IMR-90 (cell line): ENCODE measurements at regions of chr2 and their contacts with region 1.

Region 1: GRCh38 chr2:215920244-215921100 is 92.9 kb downstream of the MREG start:
- DNase-seq: peak; percentile 87
- ATAC-seq: peak; percentile 92
- H3K4me3 ChIP-seq: no peak overlapping the region
- H3K27ac ChIP-seq: no peak overlapping the region
- H3K4me1 ChIP-seq: peaks cover 12% of the 10 kb centered on the region
- H3K27me3 ChIP-seq: no peaks in the 10 kb centered on the region
- CTCF ChIP-seq: peak; percentile 95
- POLR2A ChIP-seq: peak; percentile 40; the same call in 1 of the 2 replicates
- RAD21 ChIP-seq: peak; percentile 98

Region 2: DNA sequence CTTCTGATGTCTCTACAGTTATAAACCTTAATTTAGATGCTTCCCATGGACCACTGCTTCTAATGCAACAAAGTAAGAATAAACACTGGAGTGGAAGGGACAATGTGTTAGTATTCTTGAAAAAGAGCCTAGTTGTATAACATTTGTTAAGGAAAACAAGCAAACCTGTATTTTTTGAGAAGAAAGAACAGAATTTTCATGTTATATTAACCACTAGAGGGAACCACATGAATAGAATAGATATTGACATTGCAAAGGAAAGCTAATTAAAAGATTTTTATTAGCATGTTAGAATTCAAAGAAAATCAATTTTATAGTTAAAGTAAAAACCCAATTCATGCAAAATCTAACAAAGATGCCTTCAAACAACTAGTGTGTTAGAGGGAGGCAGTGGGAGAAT is 959.8 kb before region 1 on chr2:
- CTCF ChIA-PET with region 1: no interaction called
- POLR2A ChIA-PET with region 1: no interaction called
- dilution Hi-C with region 1: no loop called
- in situ Hi-C with region 1: no loop called
- intact Hi-C with region 1: loop called (anchors 2 kb)
- DNase-seq: peak; percentile 1
- ATAC-seq: no peak
- H3K4me3 ChIP-seq: no peak overlapping the region
- H3K27ac ChIP-seq: no peak overlapping the region
- H3K4me1 ChIP-seq: no peaks in the 10 kb centered on the region
- H3K27me3 ChIP-seq: no peaks in the 10 kb centered on the region; the same call in 1 of the 2 replicates
- CTCF ChIP-seq: peak; percentile 28; the same call in 1 of the 2 replicates
- POLR2A ChIP-seq: no peak
- RAD21 ChIP-seq: peak; percentile 39

Region 3: DNA sequence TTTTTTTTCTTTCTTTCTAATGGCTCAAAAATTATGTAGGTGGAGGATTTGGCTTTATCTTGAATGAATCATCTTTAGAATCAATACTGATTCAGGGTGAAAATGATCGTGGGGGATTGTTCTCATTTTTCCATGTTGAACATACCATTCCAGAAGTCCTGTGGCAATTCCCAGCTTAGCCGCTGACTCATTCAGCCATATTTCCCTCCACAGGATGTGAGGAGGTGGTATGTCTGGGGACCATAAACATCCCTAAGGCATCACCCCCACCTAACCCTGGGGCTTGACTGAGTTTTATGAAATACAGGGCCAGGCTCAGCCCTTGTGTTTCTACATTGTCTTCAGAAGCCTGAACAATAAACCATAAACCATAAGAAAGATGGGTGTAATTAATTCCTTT is 391.9 kb before region 1 on chr2:
- CTCF ChIA-PET with region 1: no interaction called
- POLR2A ChIA-PET with region 1: no interaction called
- dilution Hi-C with region 1: no loop called
- in situ Hi-C with region 1: no loop called
- intact Hi-C with region 1: loop called (anchors 2 kb)
- DNase-seq: peak; percentile 99
- ATAC-seq: peak; percentile 70
- H3K4me3 ChIP-seq: no peak overlapping the region
- H3K27ac ChIP-seq: peak overlapping the region; percentile 94; the same call in 1 of the 2 replicates
- H3K4me1 ChIP-seq: peaks cover 17% of the 10 kb centered on the region
- H3K27me3 ChIP-seq: no peaks in the 10 kb centered on the region
- CTCF ChIP-seq: no peak
- POLR2A ChIP-seq: no peak
- RAD21 ChIP-seq: peak; percentile 50

Region 4: GRCh38 chr2:215693193-215693998 is 227.1 kb before region 1 on chr2:
- CTCF ChIA-PET with region 1: no interaction called
- POLR2A ChIA-PET with region 1: interaction called, 5 read pairs
- dilution Hi-C with region 1: no loop called
- in situ Hi-C with region 1: no loop called
- intact Hi-C with region 1: loop called (anchors 5 kb)
- DNase-seq: peak; percentile 89
- ATAC-seq: peak; percentile 74
- H3K4me3 ChIP-seq: no peak overlapping the region
- H3K27ac ChIP-seq: peak overlapping the region; percentile 76
- H3K4me1 ChIP-seq: peaks cover 14% of the 10 kb centered on the region
- H3K27me3 ChIP-seq: no peaks in the 10 kb centered on the region
- CTCF ChIP-seq: no peak
- POLR2A ChIP-seq: no peak
- RAD21 ChIP-seq: no peak

Region 5: DNA sequence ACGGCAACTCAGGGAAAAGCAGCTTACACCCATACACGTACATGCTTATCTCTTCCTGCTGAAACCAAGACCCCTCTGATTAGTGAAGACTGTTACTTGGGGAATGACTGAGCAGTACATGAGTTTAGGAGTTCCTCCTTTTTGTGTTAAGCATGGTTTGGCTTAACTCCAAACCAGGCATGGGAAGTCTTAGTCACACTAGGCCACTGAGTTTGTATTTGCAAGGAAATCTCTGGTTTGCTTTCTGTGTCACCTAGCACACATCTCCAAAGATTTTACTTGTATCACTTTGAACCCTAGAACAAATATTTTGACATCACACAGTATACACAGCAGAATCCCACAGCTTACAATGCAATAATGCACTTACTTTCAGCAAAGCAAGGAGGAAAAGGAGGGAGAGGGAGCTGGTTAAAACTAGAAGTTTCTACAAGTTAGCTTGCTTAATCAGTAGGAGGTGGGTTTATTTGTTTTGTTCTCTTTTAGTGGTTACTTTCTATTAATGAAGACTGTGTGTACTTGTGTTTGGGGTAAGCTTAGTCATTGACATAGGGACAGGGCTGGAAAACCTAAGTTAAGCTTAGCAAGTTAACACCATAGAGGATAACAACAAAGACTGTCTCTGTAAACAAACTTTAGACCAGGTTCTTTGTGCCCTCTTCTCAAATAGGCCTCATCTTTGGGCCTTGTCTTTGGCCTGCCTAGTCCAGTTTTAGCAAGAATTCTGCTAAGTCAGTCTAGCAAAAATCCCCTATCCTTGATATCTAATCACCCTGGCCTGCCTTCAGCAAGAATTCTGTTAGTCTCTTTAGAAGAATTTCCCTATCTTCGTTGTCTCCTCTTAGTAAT is 126.5 kb before region 1 on chr2:
- CTCF ChIA-PET with region 1: interaction called, 6 read pairs
- POLR2A ChIA-PET with region 1: no interaction called
- dilution Hi-C with region 1: no loop called
- in situ Hi-C with region 1: no loop called
- intact Hi-C with region 1: loop called (anchors 2 kb)
- DNase-seq: peak; percentile 98
- ATAC-seq: peak; percentile 84
- H3K4me3 ChIP-seq: no peak overlapping the region
- H3K27ac ChIP-seq: peak overlapping the region; percentile 48; the same call in 1 of the 2 replicates
- H3K4me1 ChIP-seq: peaks cover 11% of the 10 kb centered on the region
- H3K27me3 ChIP-seq: no peaks in the 10 kb centered on the region
- CTCF ChIP-seq: no peak
- POLR2A ChIP-seq: no peak
- RAD21 ChIP-seq: no peak